ENCODE measurements at regions of chr3 and their contacts with region 1.

Region 1: GRCh38 chr3:57227204-57227929 is at the start of gene APPL1:
- DNase-seq: peak; percentile 95
- ATAC-seq: peak; percentile 97
- H3K4me3 Mint-ChIP-seq: peak within 1 kb of the TSS; percentile 94
- H3K27ac Mint-ChIP-seq: peak within 1 kb of the TSS; percentile 87
- H3K4me1 Mint-ChIP-seq: peaks cover 45% of the 10 kb centered on the region
- H3K27me3 Mint-ChIP-seq: no peaks in the 10 kb centered on the region
- CTCF ChIP-seq: no peak
- total RNA-seq, gene APPL1: 58.3 and 62.0 TPM in 2 replicates

Region 2: GRCh38 chr3:56682462-56683121 is 544.8 kb before region 1 on chr3:
- CTCF ChIA-PET with region 1: no interaction called
- POLR2A ChIA-PET with region 1: interaction called, 5 read pairs
- intact Hi-C with region 1: loop called (anchors 2 kb)
- DNase-seq: peak; percentile 76
- ATAC-seq: peak; percentile 73
- H3K4me3 Mint-ChIP-seq: peak overlapping the region; percentile 97
- H3K27ac Mint-ChIP-seq: peak overlapping the region; percentile 97
- H3K4me1 Mint-ChIP-seq: peaks cover 49% of the 10 kb centered on the region
- H3K27me3 Mint-ChIP-seq: no peaks in the 10 kb centered on the region
- CTCF ChIP-seq: no peak

Region 3: DNA sequence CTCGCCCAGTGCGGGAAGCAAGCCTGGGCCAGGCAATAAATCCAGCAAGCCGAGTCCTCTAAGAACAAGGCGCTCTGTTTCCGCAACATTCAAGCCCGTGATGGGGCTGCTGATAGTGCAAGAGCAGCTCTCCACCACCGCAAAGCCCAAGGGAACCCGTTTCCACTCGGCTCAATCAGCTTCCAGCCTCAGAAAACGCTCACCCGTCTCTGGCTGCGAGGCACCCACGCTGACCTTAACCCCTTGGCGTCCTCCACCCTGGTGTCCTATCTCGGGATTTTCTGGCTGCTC is 149.1 kb before region 1 on chr3:
- CTCF ChIA-PET with region 1: no interaction called
- POLR2A ChIA-PET with region 1: no interaction called
- intact Hi-C with region 1: loop called (anchors 5 kb)
- DNase-seq: peak; percentile 65
- ATAC-seq: peak; percentile 85
- H3K4me3 Mint-ChIP-seq: peak overlapping the region; percentile 78
- H3K27ac Mint-ChIP-seq: peak overlapping the region; percentile 62
- H3K4me1 Mint-ChIP-seq: peaks cover 20% of the 10 kb centered on the region
- H3K27me3 Mint-ChIP-seq: peaks cover 50% of the 10 kb centered on the region
- CTCF ChIP-seq: no peak

Region 4: DNA sequence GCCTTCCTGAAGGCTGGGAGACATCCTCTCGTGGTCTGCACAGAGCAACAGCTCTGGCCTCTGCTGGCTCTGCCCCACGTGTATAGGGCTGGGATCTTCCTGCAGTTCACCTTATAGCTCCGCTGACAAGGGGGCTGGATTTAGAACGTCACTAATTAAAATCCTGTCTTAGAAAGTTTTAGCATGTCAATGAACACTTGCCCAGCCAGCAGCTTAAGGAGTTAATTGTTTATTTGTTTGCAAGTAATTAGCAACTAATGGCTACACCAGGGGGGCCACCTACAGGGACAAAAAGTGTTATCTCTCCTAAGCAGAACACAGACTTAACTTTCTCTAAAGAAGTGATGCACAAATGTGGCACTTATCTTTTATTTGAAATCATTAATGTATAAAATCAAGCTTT is 27.5 kb before region 1 on chr3 and contains the start of gene HESX1:
- CTCF ChIA-PET with region 1: interaction called, 3 read pairs
- POLR2A ChIA-PET with region 1: interaction called, 10 read pairs
- intact Hi-C with region 1: no loop called
- DNase-seq: no peak
- ATAC-seq: no peak
- H3K4me3 Mint-ChIP-seq: no peak within 1 kb of the TSS
- H3K27ac Mint-ChIP-seq: no peak within 1 kb of the TSS
- H3K4me1 Mint-ChIP-seq: no peaks in the 10 kb centered on the region
- H3K27me3 Mint-ChIP-seq: no peaks in the 10 kb centered on the region
- CTCF ChIP-seq: no peak
- total RNA-seq, gene HESX1: 0.24 TPM in 1 of 2 replicates, not detected in the other

Region 5: GRCh38 chr3:57755668-57756527 is 528.5 kb after region 1 on chr3 and contains the start of gene SLMAP:
- CTCF ChIA-PET with region 1: no interaction called
- POLR2A ChIA-PET with region 1: interaction called, 3 read pairs
- intact Hi-C with region 1: loop called (anchors 2 kb)
- DNase-seq: peak; percentile 87
- ATAC-seq: peak; percentile 94
- H3K4me3 Mint-ChIP-seq: peak within 1 kb of the TSS; percentile 95
- H3K27ac Mint-ChIP-seq: peak within 1 kb of the TSS; percentile 94
- H3K4me1 Mint-ChIP-seq: peaks cover 39% of the 10 kb centered on the region
- H3K27me3 Mint-ChIP-seq: no peaks in the 10 kb centered on the region
- CTCF ChIP-seq: no peak
- total RNA-seq, gene SLMAP: 45.4 and 57.1 TPM in 2 replicates